Spleen (tissue), 13 donors: ENCODE measurements at regions of chr14 and their contacts with region 1.

Region 1: DNA sequence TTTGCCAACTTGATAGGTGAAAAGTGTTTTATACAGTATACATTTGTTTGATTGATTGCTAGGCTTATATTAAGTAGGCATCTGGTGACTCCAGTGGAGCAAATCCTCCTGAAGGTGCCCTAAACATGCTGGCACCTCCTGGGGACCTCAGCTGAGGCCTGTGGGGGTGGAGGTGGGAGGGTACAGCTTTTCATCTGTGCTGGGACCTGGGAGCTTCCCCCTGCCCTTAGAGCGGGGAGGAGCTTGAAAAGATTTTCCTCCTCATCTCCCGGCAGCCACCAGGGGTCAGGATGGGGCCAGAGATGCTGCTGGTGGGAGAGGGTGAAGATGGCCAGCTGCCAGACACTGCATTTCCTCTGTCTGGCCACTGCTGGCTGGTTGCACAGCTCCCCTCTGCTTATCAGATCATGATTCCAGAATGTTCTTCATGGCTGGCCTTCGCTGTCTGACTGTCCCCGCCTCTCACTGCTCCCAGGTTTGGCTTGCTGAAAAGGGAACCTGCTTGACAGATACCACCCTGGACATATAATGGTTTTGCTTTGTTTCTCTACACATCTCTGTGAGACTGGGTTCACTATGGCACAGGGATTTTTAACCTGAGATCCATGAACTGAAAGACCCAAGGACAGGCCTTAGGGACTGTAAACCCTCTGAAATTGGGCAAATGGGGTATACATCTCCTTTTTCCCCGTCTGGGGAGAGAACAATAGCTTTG is 10.5 kb upstream of the JPH4 start:
- DNase-seq: peak; percentile 92
- H3K4me3 ChIP-seq: no peak overlapping the region
- H3K27ac ChIP-seq: peak overlapping the region in 2 of 8 donors; percentile 5 to 8
- H3K4me1 ChIP-seq: peaks cover 6 to 11% (median 9%) of the 10 kb centered on the region in 6 donors
- H3K27me3 ChIP-seq: peaks cover 0 to 15% (median 0%) of the 10 kb centered on the region in 7 donors
- CTCF ChIP-seq: peak; percentile 55 to 94 (median 79)
- POLR2A ChIP-seq: no peak

Region 2: DNA sequence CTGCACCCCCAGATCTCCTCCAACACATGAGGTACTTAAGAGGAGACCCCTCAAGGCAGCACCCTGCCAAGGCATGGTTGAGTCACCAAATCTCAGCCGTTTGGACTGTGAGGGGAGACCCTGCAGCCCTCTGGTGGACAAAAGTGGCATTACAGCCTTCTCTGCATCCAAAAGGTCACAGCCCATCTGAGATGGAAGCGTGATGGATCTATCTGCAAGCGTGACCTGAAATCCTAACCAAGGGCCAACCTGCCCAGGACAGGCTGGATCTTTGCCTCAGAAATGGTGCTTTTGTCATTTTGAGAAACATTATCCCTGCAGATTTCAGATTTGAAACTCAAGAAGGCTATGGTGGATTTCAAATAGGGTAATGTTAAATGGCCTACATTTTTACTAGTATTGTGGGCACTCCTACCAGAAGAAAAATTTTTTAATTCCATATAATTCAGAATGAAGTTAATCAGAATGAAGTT is 340.8 kb after region 1 on chr14:
- intact Hi-C with region 1: loop called (anchors 5 kb)
- DNase-seq: peak; percentile 84
- H3K4me3 ChIP-seq: no peak overlapping the region
- H3K27ac ChIP-seq: no peak overlapping the region
- H3K4me1 ChIP-seq: peaks cover 0 to 9% (median 6%) of the 10 kb centered on the region in 6 donors
- H3K27me3 ChIP-seq: no peaks in the 10 kb centered on the region
- CTCF ChIP-seq: peak; percentile 43 to 92 (median 83)
- POLR2A ChIP-seq: no peak